Psoas muscle (tissue), 8 donors: ENCODE measurements at regions of chr9 and their contacts with region 1.

Region 1: GRCh38 chr9:108924466-108924865 is 9.5 kb downstream of the ELP1 start:
- DNase-seq: no peak
- ATAC-seq: no peak
- H3K4me3 ChIP-seq: no peak overlapping the region
- H3K27ac ChIP-seq: no peak overlapping the region
- H3K4me1 ChIP-seq: no peaks in the 10 kb centered on the region
- H3K27me3 ChIP-seq: no peaks in the 10 kb centered on the region
- CTCF ChIP-seq: no peak

Region 2: GRCh38 chr9:108859459-108860114 is 64.9 kb before region 1 on chr9:
- intact Hi-C with region 1: no loop called
- DNase-seq: no peak
- ATAC-seq: no peak
- H3K4me3 ChIP-seq: no peak overlapping the region
- H3K27ac ChIP-seq: no peak overlapping the region
- H3K4me1 ChIP-seq: no peaks in the 10 kb centered on the region
- H3K27me3 ChIP-seq: no peaks in the 10 kb centered on the region
- CTCF ChIP-seq: no peak

Region 3: GRCh38 chr9:108882052-108882888 is 42.2 kb before region 1 on chr9:
- intact Hi-C with region 1: loop called in 1 of 2 experiments (anchors 5 kb)
- DNase-seq: no peak
- ATAC-seq: no peak
- H3K4me3 ChIP-seq: no peak overlapping the region
- H3K27ac ChIP-seq: no peak overlapping the region
- H3K4me1 ChIP-seq: no peaks in the 10 kb centered on the region
- H3K27me3 ChIP-seq: no peaks in the 10 kb centered on the region
- CTCF ChIP-seq: no peak